Panc1 (cell line): ENCODE measurements at regions of chr19 and their contacts with region 1.

Region 1: GRCh38 chr19:47600246-47601179 is 8.4 kb upstream of the BICRA start:
- DNase-seq: peak; percentile 85
- ATAC-seq: peak; percentile 94
- H3K4me3 ChIP-seq: peak overlapping the region; percentile 66 to 81
- H3K27ac ChIP-seq: peak overlapping the region; percentile 84
- H3K4me1 ChIP-seq: peaks cover 8% of the 10 kb centered on the region
- H3K27me3 ChIP-seq: no peaks in the 10 kb centered on the region
- CTCF ChIP-seq: no peak

Region 2: DNA sequence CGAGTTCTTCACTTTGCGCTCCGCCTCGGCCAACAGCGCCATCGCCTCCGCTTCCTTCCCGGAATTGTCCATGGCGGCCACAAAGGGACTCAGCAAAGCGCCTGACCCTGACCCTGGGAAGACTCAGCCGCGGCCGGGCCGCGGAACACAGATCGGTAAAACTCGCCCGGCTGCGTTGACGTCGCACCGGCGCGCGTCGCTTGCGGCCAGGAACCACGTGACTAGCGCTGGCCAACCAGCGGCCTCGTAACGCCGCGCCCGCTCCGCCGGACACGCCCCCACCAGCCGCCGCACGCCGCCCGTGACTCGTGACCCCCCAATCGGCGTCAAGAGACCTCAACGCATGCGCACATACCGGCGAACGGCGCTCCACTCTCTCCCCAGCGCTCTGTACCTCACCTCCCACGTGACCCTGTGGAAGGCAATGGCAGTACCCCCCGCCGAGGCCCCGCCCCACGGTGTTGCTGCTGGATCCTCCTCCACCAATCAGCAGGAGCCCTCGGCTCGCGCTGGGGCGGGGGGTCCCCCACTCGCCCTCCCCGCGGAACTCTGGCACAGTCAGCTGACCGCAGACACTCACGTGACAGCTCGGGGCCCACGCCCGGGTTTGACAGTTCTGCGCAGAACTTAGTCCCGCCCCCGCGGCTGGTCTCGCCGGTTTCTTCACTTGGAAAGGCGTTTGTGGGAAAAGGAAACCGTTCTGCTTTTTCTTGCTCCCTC is 85.5 kb before region 1 on chr19 and contains the start of gene NAPA:
- CTCF ChIA-PET with region 1: no interaction called
- POLR2A ChIA-PET with region 1: no interaction called
- in situ Hi-C with region 1: no loop called
- intact Hi-C with region 1: loop called (anchors 10 kb)
- DNase-seq: peak; percentile 94
- ATAC-seq: peak; percentile 97
- H3K4me3 ChIP-seq: peak within 1 kb of the TSS; percentile 90 to 98
- H3K27ac ChIP-seq: peak within 1 kb of the TSS; percentile 89
- H3K4me1 ChIP-seq: peaks cover 18% of the 10 kb centered on the region
- H3K27me3 ChIP-seq: no peaks in the 10 kb centered on the region
- CTCF ChIP-seq: no peak
- total RNA-seq, gene NAPA: 71.0 TPM

Region 3: GRCh38 chr19:47561440-47562057 is 39.0 kb before region 1 on chr19:
- CTCF ChIA-PET with region 1: no interaction called
- POLR2A ChIA-PET with region 1: interaction called, 12 read pairs
- in situ Hi-C with region 1: no loop called
- intact Hi-C with region 1: no loop called
- DNase-seq: no peak
- ATAC-seq: no peak
- H3K4me3 ChIP-seq: no peak overlapping the region
- H3K27ac ChIP-seq: no peak overlapping the region
- H3K4me1 ChIP-seq: no peaks in the 10 kb centered on the region
- H3K27me3 ChIP-seq: no peaks in the 10 kb centered on the region
- CTCF ChIP-seq: no peak